Dorsolateral prefrontal cortex (tissue), 120 donors: ENCODE measurements at regions of chr18 and their contacts with region 1.

Region 1: GRCh38 chr18:21612125-21612991 is at the start of gene SNRPD1:
- DNase-seq: peak; percentile 66 to 92 (median 80)
- H3K4me3 ChIP-seq: peak within 1 kb of the TSS; percentile 56 to 99 (median 84)
- H3K27ac ChIP-seq: peak within 1 kb of the TSS in 57 of 59 donors; percentile 1 to 93 (median 78)
- H3K27me3 ChIP-seq: no peaks in the 10 kb centered on the region
- CTCF ChIP-seq: peak; percentile 83 to 100 (median 96)
- total RNA-seq, gene SNRPD1: 21.7 to 59.6 (median 36.3) TPM

Region 2: DNA sequence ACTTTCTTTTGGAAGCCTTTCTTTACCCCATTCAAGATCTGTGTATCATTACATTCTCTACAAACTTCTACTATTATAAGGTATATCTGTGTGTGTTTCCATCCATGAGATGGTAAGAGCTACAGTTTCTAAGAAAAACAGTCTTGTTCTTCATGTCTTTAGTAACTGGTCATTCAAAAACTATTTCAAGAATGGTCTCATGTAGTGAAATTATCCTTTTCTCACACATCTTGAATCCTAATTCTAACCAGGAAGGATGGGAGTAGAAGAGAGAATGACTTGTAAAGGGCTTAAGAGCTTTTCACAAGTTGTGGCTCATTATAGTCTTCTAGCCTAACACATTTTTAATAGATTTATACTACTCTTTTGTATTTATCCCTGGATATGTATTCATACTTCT is 548.0 kb before region 1 on chr18:
- intact Hi-C with region 1: no loop called
- DNase-seq: no peak
- H3K4me3 ChIP-seq: no peak overlapping the region
- H3K27ac ChIP-seq: no peak overlapping the region
- H3K27me3 ChIP-seq: no peaks in the 10 kb centered on the region
- CTCF ChIP-seq: no peak

Region 3: GRCh38 chr18:21600526-21601410 is 11.6 kb before region 1 on chr18 and contains the start of gene ESCO1:
- intact Hi-C with region 1: loop called (anchors 1 kb)
- DNase-seq: peak; percentile 81 to 96 (median 91)
- H3K4me3 ChIP-seq: peak within 1 kb of the TSS; percentile 63 to 100 (median 96)
- H3K27ac ChIP-seq: peak within 1 kb of the TSS; percentile 25 to 99 (median 93)
- H3K27me3 ChIP-seq: no peaks in the 10 kb centered on the region
- CTCF ChIP-seq: peak; percentile 85 to 99 (median 96)
- total RNA-seq, gene ESCO1: 13.0 to 29.8 (median 18.0) TPM

Region 4: GRCh38 chr18:21704603-21705364 is 92.4 kb after region 1 on chr18 and contains the start of gene ABHD3:
- intact Hi-C with region 1: loop called in 1 of 2 experiments (anchors 5 kb)
- DNase-seq: peak; percentile 79 to 95 (median 88)
- H3K4me3 ChIP-seq: peak within 1 kb of the TSS; percentile 54 to 96 (median 87)
- H3K27ac ChIP-seq: peak within 1 kb of the TSS; percentile 57 to 99 (median 92)
- H3K27me3 ChIP-seq: no peaks in the 10 kb centered on the region
- CTCF ChIP-seq: peak in 50 of 56 donors; percentile 14 to 58 (median 39)
- total RNA-seq, gene ABHD3: 7.1 to 49.7 (median 14.0) TPM

Region 5: DNA sequence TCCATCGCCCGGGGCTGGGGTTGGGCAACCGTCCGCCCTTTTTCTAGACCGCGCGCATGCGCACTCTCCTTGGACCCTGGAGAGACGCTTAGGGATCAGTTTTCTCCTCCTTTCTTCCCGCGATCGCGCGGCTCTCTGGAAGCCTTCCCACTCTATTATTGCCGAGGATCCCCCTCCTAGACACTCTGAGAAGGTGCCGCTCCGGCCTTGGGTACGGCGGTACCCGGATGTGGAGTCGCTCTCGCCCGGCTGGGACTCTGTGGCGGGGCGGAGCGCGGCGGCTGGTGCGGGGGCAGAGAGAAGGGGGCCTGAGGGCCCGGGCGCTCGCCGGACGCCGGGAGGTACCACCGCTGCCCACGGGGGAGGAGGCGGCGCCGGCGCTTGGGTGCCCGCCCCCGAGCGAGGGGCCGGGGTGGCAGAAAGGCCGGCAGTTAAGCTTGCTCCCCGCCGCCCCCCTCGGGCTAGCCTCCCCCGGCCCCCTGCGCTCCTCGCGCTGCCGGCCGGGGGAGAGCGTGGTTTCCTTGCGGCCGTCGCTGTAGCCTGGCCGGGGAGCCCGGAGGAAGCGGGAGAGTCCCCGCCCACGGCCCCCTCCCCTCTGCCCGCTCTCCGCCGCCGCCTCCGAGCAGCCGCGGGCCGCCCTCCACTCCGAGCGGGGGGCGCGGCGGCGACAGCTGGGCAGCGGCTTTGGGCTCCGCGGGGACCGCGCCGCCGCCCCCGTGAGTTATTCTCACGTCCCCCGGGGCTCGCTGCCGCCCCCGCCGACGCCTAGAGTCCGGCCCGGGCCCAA is 128.6 kb after region 1 on chr18 and contains the start of gene MIB1:
- intact Hi-C with region 1: loop called (anchors 1 to 2 kb)
- DNase-seq: peak in 5 of 10 donors; percentile 36 to 64 (median 55)
- H3K4me3 ChIP-seq: peak within 1 kb of the TSS; percentile 69 to 99 (median 90)
- H3K27ac ChIP-seq: peak within 1 kb of the TSS; percentile 93 to 100 (median 99)
- H3K27me3 ChIP-seq: no peaks in the 10 kb centered on the region
- CTCF ChIP-seq: peak in 17 of 56 donors; percentile 2 to 38 (median 20)
- total RNA-seq, gene MIB1: 47.7 to 85.3 (median 59.8) TPM

Region 6: DNA sequence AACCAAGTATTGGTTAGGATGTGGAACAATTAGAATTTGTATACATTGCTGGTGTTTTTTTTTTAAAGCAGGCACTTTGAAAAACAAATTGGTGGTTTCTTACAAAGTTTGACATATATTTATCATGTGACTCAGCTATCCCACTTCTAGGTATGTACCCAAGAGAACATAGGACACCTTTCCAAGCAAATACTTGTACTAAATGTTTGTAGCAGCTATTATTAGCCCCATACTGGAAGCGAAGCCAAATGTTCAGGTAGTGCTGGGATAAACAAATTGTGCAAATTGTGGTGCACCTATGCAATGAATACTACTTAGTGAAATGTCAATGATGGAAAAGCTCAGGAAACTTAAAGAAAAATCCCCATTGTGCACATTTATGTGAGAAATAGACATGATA is 229.2 kb after region 1 on chr18:
- intact Hi-C with region 1: loop called in 1 of 2 experiments (anchors 10 kb)
- DNase-seq: no peak
- H3K4me3 ChIP-seq: no peak overlapping the region
- H3K27ac ChIP-seq: no peak overlapping the region
- H3K27me3 ChIP-seq: no peaks in the 10 kb centered on the region
- CTCF ChIP-seq: no peak

Region 7: DNA sequence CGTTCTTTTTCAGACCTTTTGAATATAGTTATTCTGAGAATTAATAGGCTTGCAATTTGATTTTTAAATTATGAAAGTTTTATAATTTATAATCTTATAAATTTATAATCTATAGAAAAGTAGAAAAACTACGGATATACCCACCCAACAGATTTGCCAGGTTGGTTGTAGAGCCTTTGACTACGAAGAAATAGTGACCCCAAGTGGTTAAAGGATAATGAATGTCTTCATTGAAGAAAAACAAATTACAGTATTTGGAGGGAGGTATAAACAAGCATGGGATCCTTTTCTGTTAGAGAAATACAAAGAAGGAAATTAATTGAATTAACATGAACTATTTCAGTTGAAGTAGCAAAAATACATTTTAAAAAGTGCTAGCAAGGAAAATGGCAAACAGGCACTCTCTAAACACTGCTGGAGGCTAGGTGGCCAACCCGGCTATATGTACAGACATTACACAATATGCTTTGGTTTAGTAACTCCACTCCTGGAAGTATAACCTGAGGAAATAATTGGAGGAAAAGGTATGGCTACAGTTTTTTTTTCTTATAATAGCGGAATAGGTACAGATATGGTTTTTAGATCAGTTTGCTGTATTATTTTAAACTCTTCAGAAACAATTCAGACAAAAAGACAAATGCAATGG is 239.1 kb after region 1 on chr18:
- intact Hi-C with region 1: loop called (anchors 10 kb)
- DNase-seq: no peak
- H3K4me3 ChIP-seq: no peak overlapping the region
- H3K27ac ChIP-seq: no peak overlapping the region
- H3K27me3 ChIP-seq: no peaks in the 10 kb centered on the region
- CTCF ChIP-seq: peak in 53 of 56 donors; percentile 34 to 80 (median 52)